ENCODE measurements at regions of chr17 and their contacts with region 1.

Region 1: DNA sequence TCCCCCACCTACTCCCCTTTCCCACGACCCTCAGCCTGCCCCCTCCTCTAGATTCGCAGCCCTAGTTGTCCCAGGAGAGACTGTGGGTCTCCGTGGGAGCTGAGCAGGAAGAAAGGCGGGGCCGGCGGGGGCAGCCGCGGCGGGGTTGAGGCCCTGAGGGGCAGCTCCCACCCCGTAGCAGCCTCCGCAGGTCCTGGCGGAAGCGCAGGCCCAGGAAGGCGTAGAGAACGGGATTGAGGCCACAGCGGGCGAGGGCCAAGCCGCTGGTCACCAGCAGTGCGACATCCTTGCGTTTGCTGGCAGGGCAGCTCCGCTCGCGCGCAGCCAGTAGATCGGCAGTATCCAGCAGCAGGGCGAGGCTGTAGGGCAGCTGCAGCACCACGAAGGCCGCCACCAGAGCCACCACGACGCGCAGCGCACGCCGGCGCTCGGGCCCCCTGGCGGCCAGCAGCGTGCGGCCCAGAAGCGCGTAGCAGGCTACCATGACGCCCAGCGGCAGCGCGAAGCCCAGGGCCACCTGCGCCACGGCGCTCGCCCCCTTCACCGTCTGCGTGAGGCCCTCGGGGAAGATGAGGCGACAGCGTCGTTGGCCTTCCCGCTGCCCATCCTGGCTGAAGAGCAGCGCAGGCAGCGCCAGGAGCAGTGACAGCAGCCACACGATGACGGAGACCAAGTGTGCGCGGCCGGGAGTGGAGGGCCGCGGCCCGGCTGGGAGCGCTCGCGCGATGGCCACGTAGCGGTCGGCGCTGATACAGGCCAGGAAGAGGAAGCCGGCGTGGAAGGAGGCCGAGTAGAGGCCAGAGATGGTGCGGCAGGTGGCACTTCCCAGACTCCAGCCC is 1.9 kb downstream of the CCR10 start:
- DNase-seq: peak; percentile 62

Region 2: GRCh38 chr17:42536048-42536371 is 143.7 kb before region 1 on chr17 and contains the start of gene NAGLU:
- in situ Hi-C with region 1: loop called (anchors 10 kb)
- DNase-seq: peak; percentile 80
- total RNA-seq, gene NAGLU: 49.3 and 83.0 TPM in 2 replicates

Region 3: DNA sequence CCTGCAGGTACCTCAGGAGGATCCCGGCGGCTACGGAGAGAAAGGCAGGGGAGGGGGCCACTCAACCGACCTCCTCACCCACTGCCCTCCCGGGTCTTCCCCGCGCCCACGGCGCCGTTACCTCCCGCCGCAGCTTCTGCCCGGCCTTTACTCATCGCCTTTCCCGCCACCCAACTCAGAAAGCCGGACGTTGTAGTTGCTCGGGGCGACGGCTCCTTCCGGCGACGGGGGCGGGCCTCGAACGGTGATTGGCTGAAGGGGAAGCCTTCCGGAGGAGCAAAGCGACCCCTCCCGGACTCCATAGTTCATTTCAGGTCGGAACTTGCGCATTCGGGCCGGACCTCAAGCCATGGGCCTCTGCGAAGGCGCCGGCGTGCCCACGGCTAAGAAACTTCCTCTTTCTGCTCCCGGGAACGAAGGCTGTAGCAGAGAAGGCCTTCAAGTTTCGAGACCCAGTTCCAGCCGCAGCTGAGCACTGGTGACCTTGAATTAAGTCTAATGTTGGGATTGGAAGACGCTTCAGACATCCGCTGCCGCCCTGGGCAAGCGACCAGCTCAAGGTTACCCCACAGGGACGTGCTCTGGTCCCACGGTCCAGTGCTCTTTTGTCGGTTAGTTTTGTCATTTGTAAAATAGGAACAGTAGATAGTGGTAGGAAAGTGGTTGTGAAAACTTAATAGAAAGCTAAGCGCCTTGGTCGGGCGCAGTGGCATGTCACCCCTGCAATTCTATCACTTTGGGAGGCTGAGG is 102.0 kb before region 1 on chr17 and contains the start of gene PSMC3IP:
- in situ Hi-C with region 1: no loop called
- DNase-seq: peak; percentile 95
- total RNA-seq, gene PSMC3IP: 6.2 and 14.9 TPM in 2 replicates

Measured in G401 (cell line).